Activated naive CD4-positive, alpha-beta T cell treated with anti-CD3 and anti-CD28 coated beads, Interleukin-2, amount 10 ng/mL, durations not matched to agents 7 days and 5 days (primary cell): ENCODE measurements at regions of chr15 and their contacts with region 1.

Region 1: GRCh38 chr15:39801641-39802309 is 19.1 kb upstream of the FSIP1 start:
- DNase-seq: peak; percentile 34
- H3K4me3 Mint-ChIP-seq: no peak overlapping the region
- H3K27ac Mint-ChIP-seq: no peak overlapping the region
- H3K4me1 Mint-ChIP-seq: no peaks in the 10 kb centered on the region
- H3K27me3 Mint-ChIP-seq: peaks cover 36% of the 10 kb centered on the region

Region 2: DNA sequence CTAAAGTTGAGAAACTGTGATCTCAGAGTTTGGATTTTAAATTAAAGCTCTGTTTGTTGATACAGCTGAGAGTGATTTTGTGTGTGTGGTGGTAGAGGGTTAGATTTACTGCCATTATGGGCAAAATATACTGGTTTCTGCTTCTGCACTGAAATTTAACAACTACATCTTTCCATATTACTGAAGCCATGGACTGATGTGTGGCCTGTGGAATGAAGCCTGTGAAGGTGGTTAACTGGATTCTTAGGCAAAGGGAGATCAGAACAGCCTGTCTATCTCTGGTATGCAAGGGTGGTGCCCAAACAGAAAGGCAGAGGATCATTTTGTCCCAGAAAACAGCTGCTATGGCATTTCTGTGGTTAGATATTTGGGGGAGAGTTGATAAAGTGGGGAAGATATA is 518.2 kb before region 1 on chr15:
- CTCF ChIA-PET with region 1: no interaction called
- DNase-seq: no peak
- H3K4me3 Mint-ChIP-seq: no peak overlapping the region
- H3K27ac Mint-ChIP-seq: no peak overlapping the region
- H3K4me1 Mint-ChIP-seq: no peaks in the 10 kb centered on the region
- H3K27me3 Mint-ChIP-seq: peaks cover 8% of the 10 kb centered on the region

Region 3: DNA sequence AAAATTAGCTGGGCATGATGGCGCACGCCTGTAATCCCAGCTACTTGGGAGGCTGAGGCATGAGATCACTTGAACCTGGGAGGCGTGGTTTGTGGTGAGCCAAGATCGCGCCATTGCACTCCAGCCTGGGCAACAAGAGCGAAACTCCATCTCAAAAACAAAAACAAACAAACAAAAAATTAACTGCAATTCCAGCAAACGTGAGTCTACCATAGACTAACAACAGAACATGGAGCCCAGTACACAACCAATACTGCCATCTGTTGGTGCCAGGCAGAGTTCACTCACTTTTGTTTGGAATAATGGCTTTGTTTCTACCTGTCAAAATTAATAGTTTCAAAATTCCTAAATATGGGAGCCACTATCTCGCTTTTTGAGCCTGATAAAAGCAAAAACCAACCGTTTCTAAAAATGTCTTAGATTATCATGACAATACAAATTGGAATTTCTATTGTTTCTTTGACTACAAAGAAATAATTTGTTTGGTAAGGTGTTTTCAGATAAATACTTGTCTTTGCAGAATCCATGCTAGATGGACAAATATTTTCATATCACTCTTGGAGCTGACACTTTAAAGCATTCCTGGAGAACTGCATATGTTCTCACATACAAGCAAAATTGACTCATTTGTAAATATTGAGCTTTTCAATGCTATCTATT is 73.2 kb after region 1 on chr15:
- CTCF ChIA-PET with region 1: interaction called, 12 read pairs
- DNase-seq: peak; percentile 51
- H3K4me3 Mint-ChIP-seq: no peak overlapping the region
- H3K27ac Mint-ChIP-seq: no peak overlapping the region
- H3K4me1 Mint-ChIP-seq: no peaks in the 10 kb centered on the region
- H3K27me3 Mint-ChIP-seq: peaks cover 22% of the 10 kb centered on the region